ENCODE measurements at regions of chr22 and their contacts with region 1.

Region 1: DNA sequence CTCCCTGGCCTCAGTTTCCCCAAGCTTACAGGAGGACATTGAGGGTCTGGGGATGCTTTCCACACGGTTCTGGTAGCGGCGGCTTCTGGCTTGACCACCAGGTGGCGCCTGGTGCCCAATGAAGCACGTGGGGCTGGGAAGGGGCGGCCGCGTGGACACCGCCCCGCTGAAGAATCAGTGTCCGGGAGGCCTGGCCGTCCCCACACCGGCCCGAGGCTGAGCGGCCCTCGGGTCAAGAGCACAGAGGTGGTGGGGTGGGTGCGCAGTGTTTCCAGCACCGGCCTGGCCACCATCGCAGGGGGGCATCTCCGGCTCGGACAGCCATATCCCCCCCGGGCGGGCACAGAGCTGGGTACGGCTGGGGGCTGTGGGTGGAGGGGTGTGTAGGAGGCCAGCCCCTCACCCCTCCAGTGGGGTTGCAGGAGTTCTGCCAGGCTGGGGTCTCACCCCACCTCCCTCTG is 27.8 kb upstream of the PPARA start:
- DNase-seq: no peak
- H3K4me3 ChIP-seq: no peak overlapping the region
- H3K27me3 ChIP-seq: no peaks in the 10 kb centered on the region
- CTCF ChIP-seq: peak; percentile 92

Region 2: DNA sequence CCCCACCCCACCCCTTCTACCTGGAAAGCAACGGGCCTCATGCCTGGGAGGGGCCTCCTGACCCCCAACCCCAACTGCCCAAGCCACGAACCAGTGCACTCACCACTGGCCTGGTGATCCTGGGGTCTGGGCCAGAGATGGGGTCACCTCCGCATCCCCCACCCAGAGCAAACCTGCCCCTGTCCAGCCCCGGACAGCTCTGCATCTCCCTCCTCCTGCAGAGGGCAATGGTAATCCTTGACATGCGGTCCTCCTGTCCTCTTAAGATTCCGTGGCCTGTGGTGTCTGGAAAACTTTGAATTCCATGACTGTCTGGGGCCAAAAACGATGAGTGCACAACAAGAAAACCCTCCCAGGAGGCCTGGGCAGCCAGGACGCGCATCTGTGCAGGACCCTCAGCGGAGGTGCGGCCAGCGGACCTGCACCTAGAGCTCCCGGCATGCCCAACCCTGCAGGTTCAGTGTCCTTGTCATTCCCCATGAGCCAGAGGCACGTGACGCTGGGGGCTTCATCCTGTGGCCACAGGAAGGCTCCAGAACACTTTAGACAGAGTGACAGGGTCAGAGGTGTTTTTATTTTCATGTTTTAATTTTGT is 11.7 kb after region 1 on chr22:
- CTCF ChIA-PET with region 1: interaction called, 11 read pairs
- POLR2A ChIA-PET with region 1: no interaction called
- DNase-seq: no peak
- H3K4me3 ChIP-seq: no peak overlapping the region
- H3K27me3 ChIP-seq: no peaks in the 10 kb centered on the region
- CTCF ChIP-seq: no peak

Region 3: GRCh38 chr22:46201059-46201757 is 78.7 kb after region 1 on chr22:
- CTCF ChIA-PET with region 1: no interaction called
- POLR2A ChIA-PET with region 1: no interaction called
- DNase-seq: no peak
- H3K4me3 ChIP-seq: no peak overlapping the region
- H3K27me3 ChIP-seq: no peaks in the 10 kb centered on the region
- CTCF ChIP-seq: no peak

Region 4: DNA sequence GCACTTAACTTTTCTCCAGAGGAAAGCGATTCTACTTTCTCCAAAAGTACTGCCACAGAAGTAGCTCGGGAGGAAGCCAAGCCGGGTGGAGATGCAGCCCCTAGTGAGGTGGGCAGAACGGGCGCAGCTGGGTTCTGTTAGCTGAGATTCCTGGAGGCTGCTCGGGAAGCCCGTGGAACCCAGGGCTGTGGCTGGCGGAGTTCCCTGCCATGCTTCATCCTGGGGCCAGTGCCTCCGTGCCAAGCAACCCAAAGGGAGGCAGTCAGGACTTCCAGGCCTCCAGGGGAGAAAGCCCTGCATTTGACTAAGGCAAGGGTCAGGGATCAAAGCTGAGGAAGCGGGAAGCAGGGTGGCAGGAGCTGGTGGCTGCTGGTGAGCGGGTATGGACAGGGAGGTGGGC is 206.2 kb after region 1 on chr22:
- CTCF ChIA-PET with region 1: interaction called, 10 read pairs
- POLR2A ChIA-PET with region 1: no interaction called
- DNase-seq: no peak
- H3K4me3 ChIP-seq: no peak overlapping the region
- H3K27me3 ChIP-seq: no peaks in the 10 kb centered on the region
- CTCF ChIP-seq: no peak

Region 5: GRCh38 chr22:46381199-46381598 is 258.7 kb after region 1 on chr22:
- CTCF ChIA-PET with region 1: no interaction called
- POLR2A ChIA-PET with region 1: no interaction called
- DNase-seq: no peak
- H3K4me3 ChIP-seq: no peak overlapping the region
- H3K27me3 ChIP-seq: no peaks in the 10 kb centered on the region
- CTCF ChIP-seq: no peak

Measured in BJ (cell line).